Vagina (tissue), 2 donors: ENCODE measurements at regions of chr1 and their contacts with region 1.

Region 1: DNA sequence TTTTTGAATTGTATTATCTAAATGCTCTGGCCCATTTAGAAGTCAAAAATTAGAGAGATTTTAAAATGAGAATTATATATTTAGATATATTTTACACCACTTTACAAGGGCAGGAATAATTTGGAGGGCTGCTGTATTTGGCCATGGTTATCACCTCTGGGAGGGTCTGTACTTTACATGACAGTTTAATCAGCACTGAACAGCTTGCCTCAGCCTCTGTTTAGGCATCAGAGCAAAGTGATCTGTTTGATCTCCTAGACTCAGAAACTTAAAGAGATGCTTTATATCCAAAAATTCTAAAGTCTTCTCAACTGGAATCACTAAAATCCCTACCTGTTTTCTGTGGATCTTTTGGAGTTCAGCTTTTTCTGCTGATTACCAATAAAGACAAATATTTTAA is 5.4 kb upstream of the SPTA1 start:
- DNase-seq: no peak
- H3K4me3 ChIP-seq: no peak overlapping the region
- H3K27ac ChIP-seq: no peak overlapping the region
- H3K4me1 ChIP-seq: no peaks in the 10 kb centered on the region
- H3K27me3 ChIP-seq: no peaks in the 10 kb centered on the region
- CTCF ChIP-seq: no peak
- POLR2A ChIP-seq: no peak

Region 2: GRCh38 chr1:158509471-158510156 is 182.3 kb before region 1 on chr1:
- intact Hi-C with region 1: no loop called
- DNase-seq: no peak
- H3K4me3 ChIP-seq: no peak overlapping the region
- H3K27ac ChIP-seq: no peak overlapping the region
- H3K4me1 ChIP-seq: no peaks in the 10 kb centered on the region
- H3K27me3 ChIP-seq: no peaks in the 10 kb centered on the region
- CTCF ChIP-seq: no peak
- POLR2A ChIP-seq: no peak

Region 3: GRCh38 chr1:158611916-158612315 is 80.0 kb before region 1 on chr1:
- intact Hi-C with region 1: loop called (anchors 10 kb)
- DNase-seq: no peak
- H3K4me3 ChIP-seq: no peak overlapping the region
- H3K27ac ChIP-seq: no peak overlapping the region
- H3K4me1 ChIP-seq: no peaks in the 10 kb centered on the region
- H3K27me3 ChIP-seq: no peaks in the 10 kb centered on the region
- CTCF ChIP-seq: no peak
- POLR2A ChIP-seq: no peak